Endothelial cell of umbilical vein (primary cell): ENCODE measurements at regions of chr19 and their contacts with region 1.

Region 1: DNA sequence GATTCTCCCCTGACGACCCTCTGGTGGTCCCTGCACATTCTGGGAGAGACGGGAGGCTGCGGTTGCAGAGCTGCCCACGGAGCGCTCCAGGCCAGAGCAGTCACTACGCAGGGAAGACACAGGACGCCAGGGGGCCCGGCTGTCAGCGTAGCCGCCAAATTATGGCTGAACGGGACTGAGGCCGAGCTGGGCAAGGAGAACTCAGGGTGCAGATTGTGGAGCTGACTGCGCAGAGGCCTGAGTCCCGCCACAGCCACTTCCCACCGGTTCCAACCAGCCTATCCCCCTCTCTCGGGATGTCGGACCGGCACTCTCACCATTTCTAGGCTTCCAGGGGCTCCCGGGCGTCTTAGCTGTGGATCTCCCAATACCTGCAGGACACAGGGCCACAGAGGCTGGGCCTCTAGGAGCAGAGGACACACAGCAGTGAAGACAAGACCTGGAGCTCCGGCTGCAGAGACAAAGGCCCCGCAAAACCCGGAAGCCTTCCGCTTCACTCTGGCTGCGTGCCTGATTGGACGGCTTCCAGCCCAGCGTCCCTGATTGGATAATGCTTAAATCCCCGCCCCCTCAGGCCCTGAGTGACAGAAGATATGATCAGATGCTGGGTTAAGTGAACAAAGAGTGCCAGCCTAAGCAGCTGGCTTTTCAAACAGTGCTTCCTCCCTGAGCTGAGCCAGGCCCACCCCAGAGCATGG is at the start of gene ZNF737:
- DNase-seq: peak; percentile 95
- H3K4me3 ChIP-seq: peak within 1 kb of the TSS; percentile 47 to 70 (median 64)
- H3K27ac ChIP-seq: peak within 1 kb of the TSS; percentile 58
- H3K4me1 ChIP-seq: peaks cover 3% of the 10 kb centered on the region
- H3K27me3 ChIP-seq: no peaks in the 10 kb centered on the region
- CTCF ChIP-seq: peak; percentile 12 to 45
- POLR2A ChIP-seq: peak; percentile 54
- total RNA-seq, gene ZNF737: 4.8 and 6.0 TPM in 2 replicates

Region 2: DNA sequence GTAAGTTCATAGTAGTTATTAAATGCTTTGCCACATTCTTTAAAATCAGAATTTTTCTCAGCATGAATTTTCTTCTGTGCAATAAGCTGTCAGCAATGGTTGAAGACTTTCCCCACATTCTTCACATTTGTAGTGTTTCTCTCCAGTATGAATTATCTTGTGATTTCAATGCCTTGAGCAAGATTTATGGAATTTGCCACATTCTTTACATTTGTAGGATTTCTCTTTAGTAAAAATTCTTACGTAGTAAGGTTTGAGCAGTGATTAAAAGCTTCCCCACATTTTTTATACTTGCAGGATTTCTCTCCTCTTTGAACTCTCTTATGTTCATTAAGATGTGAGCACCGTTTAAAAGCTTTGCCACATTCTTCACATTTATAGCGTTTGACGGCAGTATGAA is 559.7 kb before region 1 on chr19:
- CTCF ChIA-PET with region 1: no interaction called
- POLR2A ChIA-PET with region 1: no interaction called
- dilution Hi-C with region 1: no loop called
- intact Hi-C with region 1: no loop called
- DNase-seq: no peak
- H3K4me3 ChIP-seq: no peak overlapping the region
- H3K27ac ChIP-seq: no peak overlapping the region
- H3K4me1 ChIP-seq: no peaks in the 10 kb centered on the region
- H3K27me3 ChIP-seq: no peaks in the 10 kb centered on the region
- CTCF ChIP-seq: no peak
- POLR2A ChIP-seq: no peak

Region 3: DNA sequence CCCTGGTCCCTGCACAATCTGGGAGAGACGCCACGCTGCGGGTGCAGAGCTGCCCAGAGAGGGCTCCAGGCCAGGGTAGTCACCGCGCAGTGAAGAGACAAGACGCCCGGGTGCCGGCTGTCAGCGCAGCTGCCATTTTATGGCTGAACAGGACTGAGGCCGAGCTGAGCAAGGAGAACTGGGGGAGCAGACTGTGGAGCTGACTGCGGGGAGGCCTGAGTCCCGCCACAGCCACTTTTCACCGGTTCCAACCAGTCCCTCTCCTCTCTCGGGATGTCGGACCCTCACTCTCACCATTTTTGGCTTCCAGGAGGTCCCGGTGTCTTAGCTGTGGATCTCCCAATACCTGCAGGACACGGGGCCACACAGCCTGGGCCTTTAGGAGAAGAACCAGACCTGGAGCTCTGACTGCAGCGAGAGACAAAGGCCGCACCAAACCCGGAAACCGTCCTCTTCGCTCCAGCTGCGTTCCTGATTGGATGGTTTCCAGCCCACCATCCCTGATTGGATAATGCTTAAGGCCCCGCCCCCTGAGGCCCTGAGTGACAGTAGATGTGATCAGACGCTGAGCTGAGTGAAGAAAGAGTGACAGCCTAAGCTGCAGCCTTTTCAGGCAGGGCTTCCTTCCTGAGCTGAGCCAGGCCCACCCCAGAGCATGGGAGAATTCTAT is 95.8 kb after region 1 on chr19 and contains the start of gene ZNF626:
- CTCF ChIA-PET with region 1: no interaction called
- POLR2A ChIA-PET with region 1: interaction called, 11 read pairs
- dilution Hi-C with region 1: no loop called
- intact Hi-C with region 1: loop called (anchors 1 kb)
- DNase-seq: peak; percentile 96
- H3K4me3 ChIP-seq: peak within 1 kb of the TSS; percentile 83 to 85 (median 84)
- H3K27ac ChIP-seq: peak within 1 kb of the TSS; percentile 70
- H3K4me1 ChIP-seq: no peaks in the 10 kb centered on the region
- H3K27me3 ChIP-seq: no peaks in the 10 kb centered on the region
- CTCF ChIP-seq: no peak
- POLR2A ChIP-seq: peak; percentile 81
- total RNA-seq, gene ZNF626: 4.0 and 7.7 TPM in 2 replicates